ENCODE measurements at regions of chr6 and their contacts with region 1.

Region 1: DNA sequence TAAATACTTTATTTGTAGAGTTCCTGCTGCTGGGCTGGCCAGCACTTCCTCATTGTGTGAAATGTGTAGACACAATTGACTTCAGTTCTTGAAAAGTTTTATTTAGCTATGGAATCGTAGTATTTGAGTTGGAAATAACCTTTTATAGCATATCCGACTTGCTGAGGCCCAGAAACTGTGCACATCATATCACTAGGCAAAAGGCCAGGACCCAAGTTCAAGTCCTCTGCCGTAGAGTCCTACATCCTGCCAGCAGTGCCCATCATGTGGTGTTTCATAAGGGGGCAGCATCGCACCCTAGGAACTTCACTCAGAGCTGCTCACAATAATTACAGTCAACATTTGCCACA is 207.7 kb upstream of the SNX9 start:
- DNase-seq: no peak
- H3K4me3 ChIP-seq: no peak overlapping the region
- H3K4me3 Mint-ChIP-seq: no peak overlapping the region
- H3K27ac ChIP-seq: no peak overlapping the region
- H3K27ac Mint-ChIP-seq: peak overlapping the region in 1 of 8 donors; percentile 17
- H3K4me1 ChIP-seq: no peaks in the 10 kb centered on the region
- H3K4me1 Mint-ChIP-seq: no peaks in the 10 kb centered on the region
- H3K27me3 ChIP-seq: no peaks in the 10 kb centered on the region
- H3K27me3 Mint-ChIP-seq: no peaks in the 10 kb centered on the region

Region 2: DNA sequence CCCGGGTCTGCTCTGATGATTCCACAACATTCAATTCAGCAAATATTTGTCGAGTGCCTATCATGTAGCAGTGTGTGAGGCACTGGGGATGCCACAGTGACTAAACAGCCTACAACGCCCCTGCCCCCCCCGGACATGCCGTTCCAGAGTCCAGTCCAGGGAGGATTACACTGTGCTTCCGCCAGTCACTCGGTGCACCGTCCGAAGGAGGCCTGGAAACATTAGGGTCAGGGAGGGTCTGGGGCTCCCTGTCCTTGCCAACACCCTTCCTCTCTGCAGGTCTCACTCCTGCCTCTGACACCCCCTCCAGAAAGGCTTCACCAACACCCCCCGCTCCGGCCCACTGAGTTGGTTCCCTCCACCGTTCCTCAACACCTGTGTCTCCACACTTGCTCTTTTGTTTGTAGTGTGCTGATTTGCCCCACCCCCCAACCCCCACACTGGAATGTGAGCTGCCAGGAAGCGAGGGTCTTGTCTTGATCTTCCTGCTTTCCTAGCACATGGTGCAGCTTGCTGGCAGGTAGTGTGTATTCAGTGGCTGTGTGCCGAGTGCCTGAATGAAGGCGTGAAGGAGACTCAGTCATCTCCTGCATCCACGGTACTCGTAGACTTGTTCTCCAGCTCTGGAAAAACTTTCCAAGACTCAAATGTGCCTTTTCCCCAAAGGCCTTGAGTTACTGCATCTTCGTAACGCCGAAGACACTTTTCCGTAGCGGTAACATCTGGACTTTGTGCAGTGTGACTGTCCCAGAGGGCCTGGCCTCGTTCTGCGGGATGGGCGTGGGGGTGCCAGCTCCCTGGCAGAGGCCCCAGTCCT is 84.0 kb before region 1 on chr6:
- CTCF ChIA-PET with region 1: no interaction called
- POLR2A ChIA-PET with region 1: interaction called, 12 read pairs
- DNase-seq: no peak
- H3K4me3 ChIP-seq: no peak overlapping the region
- H3K4me3 Mint-ChIP-seq: no peak overlapping the region
- H3K27ac ChIP-seq: no peak overlapping the region
- H3K27ac Mint-ChIP-seq: peak overlapping the region in 1 of 8 donors; percentile 15
- H3K4me1 ChIP-seq: peaks cover 35% of the 10 kb centered on the region
- H3K4me1 Mint-ChIP-seq: peaks cover 43 to 53% (median 45%) of the 10 kb centered on the region in 3 donors
- H3K27me3 ChIP-seq: no peaks in the 10 kb centered on the region
- H3K27me3 Mint-ChIP-seq: no peaks in the 10 kb centered on the region

Measured in CD8-positive, alpha-beta memory T cell (primary cell).